ENCODE measurements at regions of chr10 and their contacts with region 1.

Region 1: DNA sequence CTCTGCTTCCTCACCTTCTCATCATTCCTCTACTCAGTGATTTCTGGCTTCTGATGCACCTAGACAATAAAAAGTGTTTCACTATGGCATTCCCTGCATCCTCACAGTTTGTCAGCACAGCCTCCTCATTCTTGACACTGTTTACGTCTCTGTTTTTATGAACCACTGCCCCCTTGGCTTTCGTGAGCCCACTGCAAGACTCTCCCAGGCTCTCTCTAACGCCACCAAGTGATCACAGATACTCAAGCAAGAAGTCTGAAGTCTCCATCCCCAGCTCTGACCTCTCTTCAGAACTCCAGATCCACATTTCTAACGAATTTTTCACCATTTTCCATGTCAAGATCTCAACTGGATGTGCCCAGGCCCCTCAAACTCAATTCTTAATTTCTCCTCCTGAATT is 8.9 kb downstream of the SLC16A9 start:
- DNase-seq: no peak
- ATAC-seq: no peak
- H3K4me3 ChIP-seq: no peak overlapping the region
- H3K27ac ChIP-seq: no peak overlapping the region
- H3K4me1 ChIP-seq: no peaks in the 10 kb centered on the region
- H3K27me3 ChIP-seq: no peaks in the 10 kb centered on the region
- CTCF ChIP-seq: no peak

Region 2: DNA sequence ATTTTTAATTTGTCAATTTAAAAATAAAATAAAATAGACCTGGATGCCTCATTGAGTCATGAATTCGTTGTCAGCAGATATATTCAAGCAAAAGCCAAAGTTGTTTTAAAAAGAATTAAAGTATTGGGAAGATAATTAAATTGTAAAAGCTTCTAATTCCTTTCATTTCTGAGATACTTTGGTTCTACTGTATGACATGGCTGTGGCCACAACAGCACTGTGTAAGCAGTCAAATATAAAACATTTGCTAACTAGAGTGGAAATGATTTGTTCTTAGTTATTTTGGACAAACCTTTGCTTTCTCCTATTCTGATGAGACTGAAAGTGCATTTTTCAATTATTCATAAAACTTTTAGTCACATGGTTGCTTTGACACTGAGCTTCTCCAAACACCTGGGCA is 194.8 kb before region 1 on chr10:
- intact Hi-C with region 1: no loop called
- DNase-seq: no peak
- ATAC-seq: no peak
- H3K4me3 ChIP-seq: no peak overlapping the region
- H3K27ac ChIP-seq: no peak overlapping the region
- H3K4me1 ChIP-seq: no peaks in the 10 kb centered on the region
- H3K27me3 ChIP-seq: peaks cover 0 to 3% (median 0%) of the 10 kb centered on the region in 7 donors
- CTCF ChIP-seq: no peak

Region 3: DNA sequence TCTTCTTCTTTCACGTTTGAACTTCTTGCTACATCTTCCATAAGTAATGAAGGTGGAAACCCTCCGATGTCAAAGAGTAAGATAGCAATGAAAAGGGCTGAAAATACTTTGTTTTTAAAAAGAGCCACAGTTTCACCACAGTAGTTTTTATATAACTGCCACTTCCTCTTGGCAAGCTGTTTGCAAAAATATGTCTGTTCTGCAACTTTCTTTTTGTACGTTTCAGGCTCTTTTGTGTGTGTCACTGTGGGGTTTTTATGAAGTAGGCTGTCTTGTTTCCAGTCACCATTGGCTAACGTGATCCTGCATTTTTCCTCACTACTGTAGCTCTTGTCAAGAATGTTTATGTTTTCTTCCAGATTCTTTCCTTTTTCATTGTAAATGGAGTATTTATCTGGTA is 46.7 kb before region 1 on chr10:
- intact Hi-C with region 1: loop called in 1 of 10 experiments (anchors 5 kb)
- DNase-seq: no peak
- ATAC-seq: peak in 1 of 8 donors; percentile 29
- H3K4me3 ChIP-seq: no peak overlapping the region
- H3K27ac ChIP-seq: no peak overlapping the region
- H3K4me1 ChIP-seq: no peaks in the 10 kb centered on the region
- H3K27me3 ChIP-seq: no peaks in the 10 kb centered on the region
- CTCF ChIP-seq: no peak

Measured in heart right ventricle (tissue), 16 donors.